Spleen (tissue), 13 donors: ENCODE measurements at regions of chr16 and their contacts with region 1.

Region 1: GRCh38 chr16:3509470-3509928 is 8.7 kb downstream of the CLUAP1 start:
- DNase-seq: peak; percentile 84
- H3K4me3 ChIP-seq: no peak overlapping the region
- H3K27ac ChIP-seq: peak overlapping the region in 6 of 8 donors; percentile 7 to 68 (median 32)
- H3K4me1 ChIP-seq: peaks cover 0 to 17% (median 2%) of the 10 kb centered on the region in 6 donors
- H3K27me3 ChIP-seq: no peaks in the 10 kb centered on the region
- CTCF ChIP-seq: no peak
- POLR2A ChIP-seq: no peak

Region 2: GRCh38 chr16:3282730-3283524 is 226.6 kb before region 1 on chr16 and contains the start of gene ZNF263:
- intact Hi-C with region 1: loop called (anchors 10 kb)
- DNase-seq: peak; percentile 97
- H3K4me3 ChIP-seq: peak within 1 kb of the TSS; percentile 77 to 99 (median 96)
- H3K27ac ChIP-seq: peak within 1 kb of the TSS; percentile 97 to 100 (median 100)
- H3K4me1 ChIP-seq: peaks cover 17 to 46% (median 37%) of the 10 kb centered on the region in 6 donors
- H3K27me3 ChIP-seq: no peaks in the 10 kb centered on the region
- CTCF ChIP-seq: peak in 4 of 11 experiments; percentile 9 to 19 (median 14)
- POLR2A ChIP-seq: peak in 2 of 3 donors; percentile 4 to 36
- total RNA-seq, gene ZNF263: 27.8 to 51.9 (median 39.1) TPM